T-cell (primary cell): ENCODE measurements at regions of chr12 and their contacts with region 1.

Region 1: GRCh38 chr12:9741726-9742125 is 8.8 kb upstream of the CLECL1 start:
- DNase-seq: peak in 34 of 35 experiments; percentile 46 to 93 (median 79)
- ATAC-seq: peak; percentile 77 to 84 (median 80)
- H3K4me3 ChIP-seq: peak overlapping the region in 1 of 2 donors; percentile 17
- H3K4me3 Mint-ChIP-seq: peak overlapping the region; percentile 70 to 79 (median 72)
- H3K27ac ChIP-seq: peak overlapping the region; percentile 94
- H3K27ac Mint-ChIP-seq: peak overlapping the region; percentile 90 to 98
- H3K4me1 ChIP-seq: peaks cover 35 to 41% of the 10 kb centered on the region in 2 experiments
- H3K4me1 Mint-ChIP-seq: peaks cover 65 to 72% (median 69%) of the 10 kb centered on the region in 3 donors
- H3K27me3 ChIP-seq: no peaks in the 10 kb centered on the region
- H3K27me3 Mint-ChIP-seq: no peaks in the 10 kb centered on the region

Region 2: GRCh38 chr12:7797698-7798398 is 1943.9 kb before region 1 on chr12:
- CTCF ChIA-PET with region 1: no interaction called
- POLR2A ChIA-PET with region 1: no interaction called
- DNase-seq: no peak
- ATAC-seq: no peak
- H3K4me3 ChIP-seq: no peak overlapping the region
- H3K4me3 Mint-ChIP-seq: no peak overlapping the region
- H3K27ac ChIP-seq: no peak overlapping the region
- H3K27ac Mint-ChIP-seq: no peak overlapping the region
- H3K4me1 ChIP-seq: no peaks in the 10 kb centered on the region
- H3K4me1 Mint-ChIP-seq: no peaks in the 10 kb centered on the region
- H3K27me3 ChIP-seq: no peaks in the 10 kb centered on the region
- H3K27me3 Mint-ChIP-seq: peaks cover 0 to 1% of the 10 kb centered on the region in 2 donors

Region 3: DNA sequence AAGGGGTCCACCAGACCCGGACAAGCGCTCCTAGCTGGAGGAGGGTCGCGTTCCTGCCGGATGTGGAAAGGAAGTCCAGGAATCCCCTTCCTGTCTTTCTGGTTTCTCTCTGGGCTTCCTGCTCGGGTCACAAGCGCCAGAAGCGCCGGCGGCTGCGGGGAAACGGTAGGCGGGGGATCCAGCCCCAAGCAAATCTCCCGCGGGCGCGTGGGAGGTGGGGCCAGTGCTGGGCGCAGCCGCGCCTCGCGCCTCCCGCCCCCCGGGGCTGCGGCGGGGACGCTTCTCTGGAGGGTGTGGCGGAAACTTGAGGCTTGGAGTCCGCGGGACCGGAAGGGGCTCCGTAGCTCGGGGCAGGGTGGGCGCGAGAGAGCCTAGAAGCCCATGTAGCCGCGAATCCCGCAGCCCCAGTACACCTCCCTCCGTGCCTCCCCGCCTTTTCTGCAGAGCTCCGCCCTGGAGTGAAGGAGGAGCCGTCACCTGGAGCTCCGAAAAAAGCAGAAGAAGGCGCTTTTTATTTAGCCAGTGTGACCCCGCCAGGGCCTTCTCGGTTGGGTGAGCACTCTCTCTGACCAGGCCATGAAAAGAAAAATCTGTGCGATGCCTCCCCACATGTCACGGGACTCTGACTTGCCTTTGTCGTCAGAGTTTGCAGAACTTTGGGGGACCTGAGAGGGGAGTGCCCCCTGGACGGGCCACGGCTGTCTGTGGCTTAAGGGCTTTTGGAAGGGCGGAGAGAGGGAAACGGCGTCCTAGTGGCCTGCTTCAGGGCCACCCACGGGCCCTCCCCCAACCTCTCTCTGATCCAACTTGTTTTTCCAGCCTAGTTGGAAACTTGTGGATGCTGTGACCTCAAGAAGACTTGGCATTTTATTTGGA is 93.7 kb before region 1 on chr12:
- CTCF ChIA-PET with region 1: interaction called, 3 to 22 read pairs
- POLR2A ChIA-PET with region 1: interaction called in 1 of 2 experiments, 5 read pairs
- DNase-seq: peak; percentile 82 to 95 (median 89)
- ATAC-seq: peak; percentile 76 to 80 (median 78)
- H3K4me3 ChIP-seq: peak overlapping the region; percentile 77 to 100
- H3K4me3 Mint-ChIP-seq: peak overlapping the region; percentile 90 to 95 (median 92)
- H3K27ac ChIP-seq: peak overlapping the region; percentile 91
- H3K27ac Mint-ChIP-seq: peak overlapping the region; percentile 98
- H3K4me1 ChIP-seq: peaks cover 21 to 39% of the 10 kb centered on the region in 2 experiments
- H3K4me1 Mint-ChIP-seq: peaks cover 52 to 64% (median 58%) of the 10 kb centered on the region in 3 donors
- H3K27me3 ChIP-seq: no peaks in the 10 kb centered on the region
- H3K27me3 Mint-ChIP-seq: no peaks in the 10 kb centered on the region

Region 4: DNA sequence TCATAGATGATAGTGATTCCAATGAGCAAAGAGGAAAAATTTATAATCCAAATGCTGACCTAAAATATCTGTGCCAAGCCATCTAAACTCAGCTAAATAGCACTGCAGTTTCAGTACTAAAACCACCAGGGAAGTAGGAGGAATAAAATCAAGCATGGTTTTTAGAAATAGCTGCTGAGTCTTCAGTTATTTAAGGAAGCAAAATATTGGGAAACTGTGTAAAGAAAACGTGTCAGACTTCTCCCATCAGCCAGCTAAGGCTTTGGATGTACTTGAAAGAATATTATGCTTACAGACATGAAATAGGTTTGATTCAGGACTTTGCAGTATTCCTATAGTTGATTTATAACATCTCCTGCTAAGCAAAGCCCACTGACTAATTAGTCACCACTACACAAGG is 47.5 kb before region 1 on chr12:
- CTCF ChIA-PET with region 1: interaction called, 3 read pairs
- POLR2A ChIA-PET with region 1: interaction called in 1 of 2 experiments, 13 read pairs
- DNase-seq: no peak
- ATAC-seq: no peak
- H3K4me3 ChIP-seq: no peak overlapping the region
- H3K4me3 Mint-ChIP-seq: no peak overlapping the region
- H3K27ac ChIP-seq: peak overlapping the region; percentile 15
- H3K27ac Mint-ChIP-seq: peak overlapping the region in 1 of 2 donors; percentile 57
- H3K4me1 ChIP-seq: peaks cover 4 to 5% of the 10 kb centered on the region in 2 experiments
- H3K4me1 Mint-ChIP-seq: peaks cover 26 to 45% (median 35%) of the 10 kb centered on the region in 3 donors
- H3K27me3 ChIP-seq: no peaks in the 10 kb centered on the region
- H3K27me3 Mint-ChIP-seq: no peaks in the 10 kb centered on the region

Region 5: GRCh38 chr12:9760699-9761418 is 19.1 kb after region 1 on chr12 and contains the start of gene CD69:
- CTCF ChIA-PET with region 1: interaction called, 3 to 101 read pairs
- POLR2A ChIA-PET with region 1: interaction called, 4 to 59 read pairs
- DNase-seq: peak in 34 of 35 experiments; percentile 52 to 94 (median 85)
- ATAC-seq: peak; percentile 56 to 63 (median 62)
- H3K4me3 ChIP-seq: peak within 1 kb of the TSS; percentile 63 to 95
- H3K4me3 Mint-ChIP-seq: peak within 1 kb of the TSS; percentile 87 to 97 (median 93)
- H3K27ac ChIP-seq: peak within 1 kb of the TSS; percentile 98
- H3K27ac Mint-ChIP-seq: peak within 1 kb of the TSS; percentile 97 to 99
- H3K4me1 ChIP-seq: peaks cover 32 to 50% of the 10 kb centered on the region in 2 experiments
- H3K4me1 Mint-ChIP-seq: peaks cover 55 to 69% (median 62%) of the 10 kb centered on the region in 3 donors
- H3K27me3 ChIP-seq: no peaks in the 10 kb centered on the region
- H3K27me3 Mint-ChIP-seq: no peaks in the 10 kb centered on the region
- total RNA-seq, gene CD69: 36.7 to 746 (median 39.4) TPM

Region 6: GRCh38 chr12:9813821-9814809 is 72.4 kb after region 1 on chr12:
- CTCF ChIA-PET with region 1: interaction called, 3 to 10 read pairs
- POLR2A ChIA-PET with region 1: no interaction called
- DNase-seq: peak; percentile 82 to 95 (median 91)
- ATAC-seq: peak; percentile 96 to 98 (median 98)
- H3K4me3 ChIP-seq: peak overlapping the region; percentile 63 to 83
- H3K4me3 Mint-ChIP-seq: peak overlapping the region; percentile 82 to 90 (median 83)
- H3K27ac ChIP-seq: peak overlapping the region; percentile 61
- H3K27ac Mint-ChIP-seq: peak overlapping the region; percentile 74 to 85
- H3K4me1 ChIP-seq: peaks cover 8 to 15% of the 10 kb centered on the region in 2 experiments
- H3K4me1 Mint-ChIP-seq: peaks cover 10 to 15% (median 10%) of the 10 kb centered on the region in 3 donors
- H3K27me3 ChIP-seq: peaks cover 0 to 9% of the 10 kb centered on the region in 2 experiments
- H3K27me3 Mint-ChIP-seq: peaks cover 3 to 12% of the 10 kb centered on the region in 2 donors

Region 7: GRCh38 chr12:9843416-9843815 is 101.7 kb after region 1 on chr12:
- CTCF ChIA-PET with region 1: no interaction called
- POLR2A ChIA-PET with region 1: no interaction called
- DNase-seq: no peak
- ATAC-seq: no peak
- H3K4me3 ChIP-seq: no peak overlapping the region
- H3K4me3 Mint-ChIP-seq: no peak overlapping the region
- H3K27ac ChIP-seq: no peak overlapping the region
- H3K27ac Mint-ChIP-seq: no peak overlapping the region
- H3K4me1 ChIP-seq: no peaks in the 10 kb centered on the region
- H3K4me1 Mint-ChIP-seq: no peaks in the 10 kb centered on the region
- H3K27me3 ChIP-seq: no peaks in the 10 kb centered on the region
- H3K27me3 Mint-ChIP-seq: no peaks in the 10 kb centered on the region

Region 8: GRCh38 chr12:9940375-9940774 is 198.6 kb after region 1 on chr12:
- CTCF ChIA-PET with region 1: no interaction called
- POLR2A ChIA-PET with region 1: no interaction called
- DNase-seq: peak in 3 of 35 experiments; percentile 4 to 50 (median 13)
- ATAC-seq: no peak
- H3K4me3 ChIP-seq: no peak overlapping the region
- H3K4me3 Mint-ChIP-seq: no peak overlapping the region
- H3K27ac ChIP-seq: no peak overlapping the region
- H3K27ac Mint-ChIP-seq: no peak overlapping the region
- H3K4me1 ChIP-seq: peaks cover 0 to 3% of the 10 kb centered on the region in 2 experiments
- H3K4me1 Mint-ChIP-seq: peaks cover 8 to 16% (median 13%) of the 10 kb centered on the region in 3 donors
- H3K27me3 ChIP-seq: peaks cover 0 to 6% of the 10 kb centered on the region in 2 experiments
- H3K27me3 Mint-ChIP-seq: peaks cover 0 to 10% of the 10 kb centered on the region in 2 donors